MCF 10A (cell line): ENCODE measurements at regions of chr3 and their contacts with region 1.

Region 1: DNA sequence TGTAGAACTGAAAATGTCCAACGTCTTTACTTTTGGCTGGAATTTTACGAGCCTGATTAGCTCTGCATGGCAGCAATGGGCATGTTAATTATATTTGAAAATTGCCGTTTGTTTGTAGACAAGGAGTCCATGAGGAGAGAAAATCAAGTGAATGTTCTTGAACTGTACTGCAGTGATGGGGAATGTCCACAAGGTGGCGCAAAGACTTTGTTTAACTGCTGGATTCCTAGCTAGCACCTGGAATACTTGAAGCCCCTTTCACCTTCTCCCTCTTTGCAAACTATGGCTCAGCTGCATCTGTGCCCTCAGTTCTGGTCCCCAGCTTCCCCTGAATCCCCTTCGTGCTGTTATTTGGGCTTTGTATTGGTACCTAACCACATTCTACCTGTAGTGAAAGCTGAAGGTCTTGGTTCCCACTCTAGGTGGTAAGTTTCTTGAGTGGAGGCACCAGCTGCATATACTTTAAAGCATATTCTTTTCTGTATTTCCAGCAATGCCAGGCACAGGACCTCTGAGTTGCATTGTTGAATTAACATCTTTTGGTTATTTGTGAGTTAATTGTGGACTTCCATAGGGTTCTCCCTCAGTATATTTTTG is 25.3 kb downstream of the EXOG start:
- DNase-seq: peak; percentile 76
- H3K4me3 Mint-ChIP-seq: no peak overlapping the region
- H3K27ac Mint-ChIP-seq: no peak overlapping the region
- H3K4me1 Mint-ChIP-seq: no peaks in the 10 kb centered on the region
- H3K27me3 Mint-ChIP-seq: no peaks in the 10 kb centered on the region
- CTCF ChIP-seq: peak; percentile 87

Region 2: DNA sequence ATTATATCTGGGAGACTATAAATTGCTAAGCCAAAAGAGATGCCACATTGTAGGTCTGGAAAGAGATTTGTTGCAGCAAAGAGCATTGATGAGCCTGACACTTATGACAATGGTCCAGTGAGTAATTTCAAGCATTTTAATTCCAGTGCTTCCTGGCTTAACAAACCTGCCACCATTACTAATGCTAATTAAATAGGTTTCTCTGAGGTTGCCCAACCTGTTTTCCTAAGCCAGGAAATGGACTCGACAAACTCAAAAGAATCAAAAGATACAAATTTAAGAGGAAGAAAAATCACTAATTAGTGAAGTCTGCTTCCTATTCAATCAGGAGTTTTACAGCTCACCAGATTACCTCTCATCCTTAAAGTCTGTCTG is 696.5 kb before region 1 on chr3:
- CTCF ChIA-PET with region 1: no interaction called
- POLR2A ChIA-PET with region 1: no interaction called
- intact Hi-C with region 1: no loop called
- DNase-seq: no peak
- H3K4me3 Mint-ChIP-seq: no peak overlapping the region
- H3K27ac Mint-ChIP-seq: no peak overlapping the region
- H3K4me1 Mint-ChIP-seq: no peaks in the 10 kb centered on the region
- H3K27me3 Mint-ChIP-seq: no peaks in the 10 kb centered on the region
- CTCF ChIP-seq: no peak

Region 3: GRCh38 chr3:38507120-38507519 is 14.4 kb before region 1 on chr3:
- CTCF ChIA-PET with region 1: interaction called, 26 read pairs
- POLR2A ChIA-PET with region 1: no interaction called
- intact Hi-C with region 1: no loop called
- DNase-seq: no peak
- H3K4me3 Mint-ChIP-seq: no peak overlapping the region
- H3K27ac Mint-ChIP-seq: no peak overlapping the region
- H3K4me1 Mint-ChIP-seq: no peaks in the 10 kb centered on the region
- H3K27me3 Mint-ChIP-seq: no peaks in the 10 kb centered on the region
- CTCF ChIP-seq: no peak

Region 4: GRCh38 chr3:38551026-38551832 is 29.7 kb after region 1 on chr3:
- CTCF ChIA-PET with region 1: interaction called, 15 read pairs
- POLR2A ChIA-PET with region 1: no interaction called
- intact Hi-C with region 1: no loop called
- DNase-seq: no peak
- H3K4me3 Mint-ChIP-seq: no peak overlapping the region
- H3K27ac Mint-ChIP-seq: no peak overlapping the region
- H3K4me1 Mint-ChIP-seq: no peaks in the 10 kb centered on the region
- H3K27me3 Mint-ChIP-seq: peaks cover 36% of the 10 kb centered on the region
- CTCF ChIP-seq: no peak

Region 5: DNA sequence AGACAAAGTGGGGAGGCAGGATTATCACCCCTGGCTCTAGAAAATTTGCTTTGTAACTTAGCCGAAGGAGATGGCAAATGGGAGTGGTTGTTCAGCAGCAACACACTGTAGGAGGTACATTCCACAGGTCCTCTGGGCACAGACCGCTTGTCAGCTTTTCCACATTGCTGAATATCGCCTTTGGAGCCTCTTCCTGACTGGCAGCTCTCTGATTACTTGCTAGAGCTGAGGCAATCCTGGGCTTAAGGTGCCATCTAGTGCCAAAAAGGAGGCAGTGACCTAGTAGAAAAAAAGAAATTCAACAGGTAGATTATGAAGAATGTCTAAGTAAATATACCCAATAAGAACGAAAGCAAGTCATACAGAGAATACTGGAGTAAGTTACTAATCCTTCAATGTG is 141.1 kb after region 1 on chr3:
- CTCF ChIA-PET with region 1: interaction called, 239 read pairs
- POLR2A ChIA-PET with region 1: no interaction called
- intact Hi-C with region 1: loop called (anchors 1 kb)
- DNase-seq: peak; percentile 55
- H3K4me3 Mint-ChIP-seq: no peak overlapping the region
- H3K27ac Mint-ChIP-seq: no peak overlapping the region
- H3K4me1 Mint-ChIP-seq: no peaks in the 10 kb centered on the region
- H3K27me3 Mint-ChIP-seq: peaks cover 70% of the 10 kb centered on the region
- CTCF ChIP-seq: peak; percentile 59

Region 6: DNA sequence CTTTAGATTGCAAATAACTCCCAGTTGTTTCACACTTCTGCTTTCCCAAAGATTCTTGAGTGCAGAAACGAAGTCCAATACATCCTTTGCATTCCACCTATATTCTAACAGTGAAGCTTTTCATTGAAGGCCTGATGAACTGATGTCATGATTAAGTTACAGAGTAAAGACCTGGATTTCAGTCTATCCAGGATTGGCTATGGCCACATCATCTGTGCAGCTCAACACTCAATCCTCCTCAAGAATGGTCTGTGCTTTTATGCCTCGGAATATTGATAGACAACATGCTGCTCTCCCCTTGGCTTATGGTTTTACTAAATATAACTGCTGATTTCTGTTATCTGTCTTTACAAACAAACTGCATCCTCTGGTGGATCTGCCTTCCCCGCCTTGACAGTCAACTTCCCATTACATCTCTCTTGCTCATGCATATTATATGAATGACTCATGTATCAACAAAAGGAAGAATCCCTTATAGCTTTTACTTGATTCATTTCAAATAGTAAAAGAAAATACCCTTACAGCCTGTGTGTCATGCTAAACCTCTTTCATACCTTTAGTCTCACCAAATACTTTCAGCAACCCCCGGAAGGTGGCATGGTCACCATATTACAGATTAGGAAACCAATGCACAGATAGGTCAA is 470.8 kb after region 1 on chr3:
- CTCF ChIA-PET with region 1: interaction called, 25 read pairs
- POLR2A ChIA-PET with region 1: no interaction called
- intact Hi-C with region 1: no loop called
- DNase-seq: peak; percentile 27
- H3K4me3 Mint-ChIP-seq: no peak overlapping the region
- H3K27ac Mint-ChIP-seq: no peak overlapping the region
- H3K4me1 Mint-ChIP-seq: peaks cover 10% of the 10 kb centered on the region
- H3K27me3 Mint-ChIP-seq: peaks cover 9% of the 10 kb centered on the region
- CTCF ChIP-seq: no peak

Region 7: DNA sequence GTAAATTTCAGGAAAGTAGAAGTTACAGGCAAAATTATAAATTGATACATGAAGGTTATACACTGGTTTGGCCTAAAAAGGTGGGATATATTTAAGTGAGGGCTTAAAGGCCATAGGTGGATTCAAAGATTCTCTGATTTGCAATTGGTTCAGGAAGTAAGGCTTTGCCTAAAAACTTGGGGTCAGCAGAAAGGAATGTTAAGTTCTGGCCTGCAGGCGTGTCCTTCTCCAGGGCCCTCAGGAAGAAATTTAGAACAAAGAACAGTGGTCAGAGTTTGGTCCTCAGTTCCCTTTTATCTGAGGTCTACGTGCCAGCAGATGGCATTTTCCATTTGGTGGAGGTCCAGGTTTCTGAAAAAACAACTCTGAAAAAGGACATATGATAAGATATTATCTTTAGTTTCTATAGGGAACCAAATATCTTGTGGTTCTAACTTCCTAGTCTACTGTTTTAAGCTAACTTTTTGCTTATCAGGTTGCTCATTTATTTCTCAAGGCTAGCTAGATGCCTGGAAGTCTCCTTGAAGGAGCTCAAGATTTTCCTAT is 489.8 kb after region 1 on chr3:
- CTCF ChIA-PET with region 1: interaction called, 29 read pairs
- POLR2A ChIA-PET with region 1: no interaction called
- intact Hi-C with region 1: no loop called
- DNase-seq: no peak
- H3K4me3 Mint-ChIP-seq: no peak overlapping the region
- H3K27ac Mint-ChIP-seq: no peak overlapping the region
- H3K4me1 Mint-ChIP-seq: no peaks in the 10 kb centered on the region
- H3K27me3 Mint-ChIP-seq: peaks cover 60% of the 10 kb centered on the region
- CTCF ChIP-seq: no peak